Activated T-helper 1 cell treated with anti-CD3 and anti-CD28 coated beads, Interleukin-12 subunit alpha, Interleukin-12 subunit beta, Interleukin-2, Interleukin-4 antibody, amounts not matched to agents 30 ng/mL and 10 ng/mL and 1 ng/mL, durations not matched to agents 14 hours and 24 hours and 36 hours (primary cell): ENCODE measurements at regions of chr5 and their contacts with region 1.

Region 1: GRCh38 chr5:6745706-6746222 is 32.5 kb downstream of the TENT4A start:
- DNase-seq: no peak
- H3K4me3 Mint-ChIP-seq: no peak overlapping the region
- H3K27ac Mint-ChIP-seq: no peak overlapping the region
- H3K4me1 Mint-ChIP-seq: no peaks in the 10 kb centered on the region
- H3K27me3 Mint-ChIP-seq: no peaks in the 10 kb centered on the region

Region 2: DNA sequence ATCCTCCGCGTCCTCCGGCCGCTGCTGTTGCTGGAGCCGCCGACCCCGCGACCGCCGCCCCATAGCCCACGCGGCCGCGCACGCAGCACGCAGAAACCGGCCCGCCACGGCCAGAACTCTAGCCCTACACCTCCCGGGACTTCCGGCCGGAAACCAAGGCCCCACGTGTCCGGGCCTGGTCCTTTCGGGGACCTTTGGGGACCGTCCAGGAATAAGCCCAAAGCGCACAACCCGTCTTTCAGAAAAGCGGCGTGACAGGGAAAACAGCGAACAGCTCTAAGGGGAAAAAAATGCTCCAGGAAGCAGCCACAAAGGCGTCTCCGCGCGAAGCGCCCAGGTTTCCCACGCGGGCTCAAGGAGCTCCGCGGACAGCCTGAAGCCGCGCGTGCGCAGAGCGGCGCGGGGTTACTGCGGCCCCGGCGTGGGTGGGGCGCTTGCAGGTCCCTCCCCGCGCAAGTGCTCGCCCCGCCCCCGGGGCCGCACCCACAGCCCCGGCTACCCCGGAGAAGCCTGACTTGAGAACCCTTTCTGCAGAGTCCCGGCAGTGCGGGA is 112.8 kb before region 1 on chr5 and contains the starts of genes NSUN2 and SRD5A1:
- intact Hi-C with region 1: loop called (anchors 1 kb)
- DNase-seq: peak; percentile 90
- H3K4me3 Mint-ChIP-seq: peak within 1 kb of the TSS; percentile 98
- H3K27ac Mint-ChIP-seq: peak within 1 kb of the TSS; percentile 97
- H3K4me1 Mint-ChIP-seq: peaks cover 57% of the 10 kb centered on the region
- H3K27me3 Mint-ChIP-seq: no peaks in the 10 kb centered on the region
- total RNA-seq, gene NSUN2: 146 and 149 TPM in 2 replicates
- total RNA-seq, gene SRD5A1: 13.8 and 14.0 TPM in 2 replicates

Region 3: DNA sequence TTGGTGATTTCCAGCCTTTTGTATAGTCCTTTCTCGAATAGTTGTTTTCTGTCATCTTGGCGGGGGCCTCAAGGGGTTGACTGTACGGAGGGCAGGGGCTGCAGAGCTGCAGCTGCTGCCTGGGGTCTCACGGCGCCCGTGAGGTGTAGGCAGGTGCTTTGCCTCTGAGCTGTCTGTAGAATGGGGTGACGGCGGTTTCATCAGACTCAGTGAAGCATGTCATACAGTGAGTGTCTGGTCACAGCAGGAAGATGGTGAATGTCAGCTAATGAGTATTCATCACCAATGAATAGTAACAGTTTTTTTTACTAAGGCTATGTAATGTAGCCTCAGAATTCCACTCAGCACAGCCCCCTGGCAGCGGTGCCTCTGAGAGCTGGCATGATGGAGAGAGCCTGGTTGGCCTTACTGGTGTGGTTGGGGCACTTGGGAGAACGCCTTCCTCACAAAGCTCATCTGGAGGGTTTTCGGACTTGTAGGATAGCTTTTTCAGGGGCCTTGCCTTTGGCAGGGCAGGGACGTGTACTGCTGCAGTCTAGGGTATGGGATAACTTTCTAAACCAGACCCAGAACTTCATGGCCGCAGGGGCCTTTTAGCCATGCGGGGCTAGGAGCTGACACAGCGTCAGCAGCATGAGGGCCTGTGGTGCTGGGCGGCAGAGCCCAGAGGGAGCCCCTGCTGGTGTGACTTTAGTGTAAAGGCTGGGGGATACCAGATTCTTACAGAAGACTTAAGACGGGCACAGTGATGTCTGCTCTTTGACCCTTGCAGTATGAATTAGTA is 17.6 kb before region 1 on chr5:
- intact Hi-C with region 1: loop called (anchors 2 kb)
- DNase-seq: no peak
- H3K4me3 Mint-ChIP-seq: no peak overlapping the region
- H3K27ac Mint-ChIP-seq: peak overlapping the region; percentile 36
- H3K4me1 Mint-ChIP-seq: peaks cover 85% of the 10 kb centered on the region
- H3K27me3 Mint-ChIP-seq: no peaks in the 10 kb centered on the region